Vagina (tissue), 2 donors: ENCODE measurements at regions of chr17 and their contacts with region 1.

Region 1: GRCh38 chr17:19447085-19447583 is 36.1 kb downstream of the RNF112 start:
- DNase-seq: no peak
- H3K4me3 ChIP-seq: no peak overlapping the region
- H3K27ac ChIP-seq: peak overlapping the region; percentile 91
- H3K4me1 ChIP-seq: peaks cover 28% of the 10 kb centered on the region
- H3K27me3 ChIP-seq: no peaks in the 10 kb centered on the region
- CTCF ChIP-seq: peak; percentile 94 to 99 (median 98)
- POLR2A ChIP-seq: no peak

Region 2: DNA sequence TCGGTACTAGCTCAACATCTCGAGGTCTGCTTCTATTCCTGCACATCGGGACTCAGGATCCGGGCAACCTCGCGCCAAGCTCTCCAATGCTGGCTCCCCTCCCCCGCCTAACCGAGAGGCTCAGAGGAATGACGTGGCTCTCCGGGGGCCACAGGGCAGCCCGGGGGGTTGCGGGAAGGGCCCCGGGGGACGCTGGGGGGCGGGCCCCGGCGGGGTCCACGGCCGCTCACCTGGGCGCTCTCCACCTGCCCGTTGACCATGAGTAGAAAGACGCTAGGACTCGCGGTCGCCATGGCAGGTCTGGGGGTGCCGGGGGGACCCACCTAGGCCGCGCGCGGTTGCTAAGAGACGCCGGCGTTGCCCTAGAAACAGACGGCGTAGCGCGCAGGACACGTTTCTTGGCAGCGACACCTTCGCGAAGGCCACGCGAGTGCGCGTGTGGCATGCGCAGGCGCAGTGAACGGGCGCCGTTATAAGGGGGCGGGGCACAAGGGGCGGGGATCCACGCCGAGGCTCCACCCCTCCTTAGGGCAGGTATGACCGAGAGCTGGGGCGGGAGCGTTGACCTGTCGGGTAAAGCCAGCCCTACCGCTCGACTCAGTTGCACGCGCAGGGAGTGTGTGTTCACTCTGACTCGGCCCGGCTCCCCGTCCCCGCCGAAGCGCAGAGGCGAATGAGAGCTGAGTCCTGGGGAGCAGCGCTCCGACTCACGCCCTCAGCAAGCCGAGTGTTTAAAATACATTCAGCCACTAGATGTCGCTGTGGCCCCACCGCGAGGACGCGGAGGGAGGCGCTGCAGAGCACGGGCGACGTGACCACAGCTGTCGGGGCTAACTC is 84.6 kb before region 1 on chr17 and contains the start of gene B9D1:
- intact Hi-C with region 1: loop called (anchors 2 kb)
- DNase-seq: no peak
- H3K4me3 ChIP-seq: peak within 1 kb of the TSS; percentile 68 to 87
- H3K27ac ChIP-seq: peak within 1 kb of the TSS; percentile 88
- H3K4me1 ChIP-seq: peaks cover 11% of the 10 kb centered on the region
- H3K27me3 ChIP-seq: no peaks in the 10 kb centered on the region
- CTCF ChIP-seq: peak; percentile 99
- POLR2A ChIP-seq: peak in 1 of 2 donors; percentile 8
- total RNA-seq, gene B9D1: 50.6 TPM

Region 3: DNA sequence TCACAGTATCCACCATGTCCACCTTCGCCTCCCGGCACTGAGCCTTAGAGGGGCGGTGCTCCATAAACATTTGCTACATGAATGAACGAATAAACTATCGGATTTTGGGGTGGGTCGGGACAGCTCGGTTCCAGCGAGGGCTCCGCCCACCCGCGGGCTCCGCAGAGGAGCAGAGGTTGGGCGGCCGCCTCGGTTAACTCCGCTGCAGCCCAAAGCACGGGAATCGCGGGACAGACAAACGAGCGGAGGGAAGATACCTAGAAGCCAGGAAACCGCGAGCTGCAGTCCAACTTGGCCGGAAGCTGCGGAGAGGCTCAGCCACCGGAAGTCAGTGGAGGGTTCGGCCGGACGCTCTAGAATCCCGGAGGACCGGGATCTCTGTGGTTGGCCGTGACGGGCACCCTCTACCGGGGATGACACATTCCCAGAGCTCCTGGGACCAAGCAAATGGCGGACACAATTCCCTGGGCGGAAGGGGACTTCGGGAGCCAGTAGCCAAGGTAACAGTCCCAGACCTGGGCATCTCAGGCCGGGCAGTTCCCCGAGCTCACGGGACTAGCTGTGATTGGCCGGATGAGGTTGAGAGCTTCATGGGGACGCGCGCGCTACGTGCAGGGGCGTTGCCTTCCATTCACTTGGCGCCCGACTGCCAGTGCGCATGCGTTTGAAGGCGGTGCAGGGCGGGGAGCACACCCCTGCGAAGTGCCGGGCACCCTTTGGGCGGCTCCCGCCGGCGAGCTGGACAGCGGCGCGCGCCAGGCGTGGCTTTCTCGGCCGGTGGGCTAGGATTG is 69.3 kb before region 1 on chr17:
- intact Hi-C with region 1: loop called (anchors 5 kb)
- DNase-seq: peak; percentile 99
- H3K4me3 ChIP-seq: peak overlapping the region; percentile 85 to 95
- H3K27ac ChIP-seq: peak overlapping the region; percentile 94
- H3K4me1 ChIP-seq: peaks cover 46% of the 10 kb centered on the region
- H3K27me3 ChIP-seq: no peaks in the 10 kb centered on the region
- CTCF ChIP-seq: peak in 2 of 3 experiments; percentile 6 to 20
- POLR2A ChIP-seq: peak in 1 of 2 donors; percentile 54

Region 4: GRCh38 chr17:19533718-19534561 is 86.8 kb after region 1 on chr17 and contains the start of gene SLC47A1:
- intact Hi-C with region 1: no loop called
- DNase-seq: no peak
- H3K4me3 ChIP-seq: peak within 1 kb of the TSS; percentile 62 to 74
- H3K27ac ChIP-seq: peak within 1 kb of the TSS; percentile 75
- H3K4me1 ChIP-seq: peaks cover 24% of the 10 kb centered on the region
- H3K27me3 ChIP-seq: no peaks in the 10 kb centered on the region
- CTCF ChIP-seq: no peak
- POLR2A ChIP-seq: peak in 1 of 2 donors; percentile 41
- total RNA-seq, gene SLC47A1: 29.7 TPM